Activated CD4-positive, alpha-beta T cell treated with anti-CD3 and anti-CD28 coated beads, Interleukin-2, amount 10 ng/mL, durations not matched to agents 7 days and 5 days (primary cell): ENCODE measurements at regions of chr1 and their contacts with region 1.

Region 1: GRCh38 chr1:204363335-204364124 is 3.8 kb upstream of the PLEKHA6 start:
- DNase-seq: peak; percentile 79
- H3K4me3 Mint-ChIP-seq: peak overlapping the region; percentile 55
- H3K27ac Mint-ChIP-seq: peak overlapping the region; percentile 58
- H3K4me1 Mint-ChIP-seq: peaks cover 11% of the 10 kb centered on the region
- H3K27me3 Mint-ChIP-seq: peaks cover 4% of the 10 kb centered on the region

Region 2: DNA sequence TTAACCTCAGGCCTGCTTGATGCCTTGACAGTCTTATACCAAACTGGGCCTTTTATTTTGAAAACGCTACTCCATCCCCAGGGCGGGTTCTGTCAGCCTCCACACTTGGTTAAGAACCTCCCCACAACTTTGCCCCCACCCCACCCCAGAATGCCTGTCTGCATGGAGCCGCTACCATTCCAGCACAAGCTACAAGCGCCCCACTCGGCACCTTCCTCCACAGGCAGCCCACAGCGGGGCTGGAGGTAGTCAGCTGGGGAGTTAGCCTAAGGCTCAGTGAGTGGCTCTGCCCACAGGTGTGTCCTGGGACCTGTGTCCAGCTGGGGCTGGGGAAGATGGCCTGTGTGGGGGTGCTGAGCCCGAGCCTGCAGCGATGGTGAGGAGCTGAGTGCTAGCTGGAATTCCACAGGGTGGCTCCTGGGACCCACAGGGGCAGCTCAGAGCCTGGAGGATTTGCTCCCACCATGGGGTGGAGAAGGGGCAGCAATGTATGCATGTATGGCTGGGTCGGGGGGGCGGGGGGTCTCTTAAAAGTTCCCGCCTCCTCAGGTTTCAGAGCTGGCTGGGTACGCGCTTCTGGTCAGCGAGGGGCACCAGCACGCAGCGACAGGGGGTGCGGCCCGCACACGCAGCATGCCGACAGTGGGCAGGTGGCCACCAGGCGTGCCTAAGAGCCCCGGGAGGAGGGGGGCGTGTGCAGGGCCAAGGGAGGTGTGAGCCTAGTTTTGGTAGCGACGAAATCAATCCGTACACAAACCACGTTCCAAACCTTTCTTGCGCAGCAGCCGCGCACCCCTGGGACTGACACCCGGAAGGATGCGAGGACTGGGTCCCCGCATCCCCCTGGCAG is 212.6 kb before region 1 on chr1:
- CTCF ChIA-PET with region 1: no interaction called
- POLR2A ChIA-PET with region 1: no interaction called
- DNase-seq: no peak
- H3K4me3 Mint-ChIP-seq: peak overlapping the region; percentile 53
- H3K27ac Mint-ChIP-seq: no peak overlapping the region
- H3K4me1 Mint-ChIP-seq: peaks cover 8% of the 10 kb centered on the region
- H3K27me3 Mint-ChIP-seq: peaks cover 19% of the 10 kb centered on the region

Region 3: GRCh38 chr1:204162231-204163074 is 201.1 kb before region 1 on chr1:
- CTCF ChIA-PET with region 1: interaction called, 11 read pairs
- POLR2A ChIA-PET with region 1: no interaction called
- DNase-seq: peak; percentile 75
- H3K4me3 Mint-ChIP-seq: no peak overlapping the region
- H3K27ac Mint-ChIP-seq: peak overlapping the region; percentile 43
- H3K4me1 Mint-ChIP-seq: no peaks in the 10 kb centered on the region
- H3K27me3 Mint-ChIP-seq: no peaks in the 10 kb centered on the region

Region 4: GRCh38 chr1:204353213-204353910 is 10.2 kb before region 1 on chr1:
- CTCF ChIA-PET with region 1: interaction called, 11 read pairs
- POLR2A ChIA-PET with region 1: no interaction called
- DNase-seq: no peak
- H3K4me3 Mint-ChIP-seq: no peak overlapping the region
- H3K27ac Mint-ChIP-seq: no peak overlapping the region
- H3K4me1 Mint-ChIP-seq: peaks cover 3% of the 10 kb centered on the region
- H3K27me3 Mint-ChIP-seq: peaks cover 2% of the 10 kb centered on the region

Region 5: DNA sequence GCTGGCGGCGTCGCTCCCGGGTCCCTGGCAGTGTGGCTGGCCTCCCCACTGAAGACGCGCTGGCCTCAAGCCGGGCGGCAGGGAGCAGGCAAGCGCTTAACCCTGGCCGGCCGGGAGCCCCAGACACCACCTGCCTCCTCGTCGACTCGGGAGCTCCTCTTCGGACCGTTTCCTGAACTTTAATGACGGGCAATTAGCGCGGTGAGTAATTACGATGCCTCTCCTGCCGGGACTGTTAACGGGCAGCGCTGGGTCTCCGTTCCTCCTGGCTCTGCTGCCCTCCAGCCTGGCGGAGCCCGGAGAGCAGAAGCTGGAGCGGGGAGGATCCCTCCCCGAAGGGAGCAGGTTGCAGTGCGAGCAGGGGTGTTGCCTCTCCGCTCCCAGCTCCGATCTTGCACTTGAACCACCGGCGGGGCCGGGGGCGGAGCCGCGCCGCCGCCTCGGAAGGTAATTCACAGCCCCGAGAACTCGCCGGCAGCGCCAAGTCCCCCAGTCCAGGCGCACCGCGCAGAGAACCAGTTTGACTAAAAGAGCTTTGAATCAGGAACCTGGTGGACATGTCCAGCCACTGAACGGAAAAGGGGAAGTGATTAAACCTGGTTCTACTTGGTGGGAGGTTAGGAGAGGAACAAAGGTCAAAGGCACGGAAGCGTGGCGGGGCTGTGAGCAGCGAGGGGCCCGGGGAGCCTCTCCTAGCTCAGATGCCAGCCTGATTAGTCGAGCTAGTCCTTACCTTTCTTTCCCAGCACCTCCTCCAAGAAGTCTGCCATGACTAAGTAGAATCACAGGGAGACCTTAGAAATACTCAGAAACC is 14.5 kb after region 1 on chr1:
- CTCF ChIA-PET with region 1: interaction called, 18 read pairs
- POLR2A ChIA-PET with region 1: no interaction called
- DNase-seq: peak; percentile 40
- H3K4me3 Mint-ChIP-seq: peak overlapping the region; percentile 70
- H3K27ac Mint-ChIP-seq: no peak overlapping the region
- H3K4me1 Mint-ChIP-seq: peaks cover 10% of the 10 kb centered on the region
- H3K27me3 Mint-ChIP-seq: peaks cover 34% of the 10 kb centered on the region

Region 6: GRCh38 chr1:204438628-204439027 is 75.1 kb after region 1 on chr1:
- CTCF ChIA-PET with region 1: no interaction called
- POLR2A ChIA-PET with region 1: no interaction called
- DNase-seq: no peak
- H3K4me3 Mint-ChIP-seq: no peak overlapping the region
- H3K27ac Mint-ChIP-seq: no peak overlapping the region
- H3K4me1 Mint-ChIP-seq: peaks cover 2% of the 10 kb centered on the region
- H3K27me3 Mint-ChIP-seq: no peaks in the 10 kb centered on the region